ENCODE measurements at regions of chr5 and their contacts with region 1.

Region 1: DNA sequence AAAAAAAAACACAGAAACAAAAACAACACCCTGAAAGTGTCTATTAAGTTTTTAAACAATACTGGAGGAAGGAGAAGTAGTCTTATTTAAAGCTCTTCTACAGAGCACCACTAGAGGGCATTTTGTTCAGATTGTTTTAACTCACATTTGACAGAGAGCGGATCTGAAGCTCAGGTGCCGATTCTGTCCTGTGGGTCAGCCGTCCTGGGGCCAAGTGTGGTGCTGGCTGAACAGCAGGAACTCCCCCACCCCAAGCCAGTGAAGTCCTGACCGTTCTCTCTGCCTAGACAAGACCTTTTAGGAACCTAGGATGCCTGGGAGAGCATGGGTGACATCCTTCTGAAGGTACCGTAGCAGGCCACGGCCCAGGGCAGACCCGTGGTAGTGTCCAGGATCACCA is 3.9 kb downstream of the EXOC3 start:
- DNase-seq: no peak
- H3K4me3 Mint-ChIP-seq: no peak overlapping the region
- H3K27ac Mint-ChIP-seq: no peak overlapping the region
- H3K4me1 Mint-ChIP-seq: peaks cover 28% of the 10 kb centered on the region
- H3K27me3 Mint-ChIP-seq: no peaks in the 10 kb centered on the region

Region 2: DNA sequence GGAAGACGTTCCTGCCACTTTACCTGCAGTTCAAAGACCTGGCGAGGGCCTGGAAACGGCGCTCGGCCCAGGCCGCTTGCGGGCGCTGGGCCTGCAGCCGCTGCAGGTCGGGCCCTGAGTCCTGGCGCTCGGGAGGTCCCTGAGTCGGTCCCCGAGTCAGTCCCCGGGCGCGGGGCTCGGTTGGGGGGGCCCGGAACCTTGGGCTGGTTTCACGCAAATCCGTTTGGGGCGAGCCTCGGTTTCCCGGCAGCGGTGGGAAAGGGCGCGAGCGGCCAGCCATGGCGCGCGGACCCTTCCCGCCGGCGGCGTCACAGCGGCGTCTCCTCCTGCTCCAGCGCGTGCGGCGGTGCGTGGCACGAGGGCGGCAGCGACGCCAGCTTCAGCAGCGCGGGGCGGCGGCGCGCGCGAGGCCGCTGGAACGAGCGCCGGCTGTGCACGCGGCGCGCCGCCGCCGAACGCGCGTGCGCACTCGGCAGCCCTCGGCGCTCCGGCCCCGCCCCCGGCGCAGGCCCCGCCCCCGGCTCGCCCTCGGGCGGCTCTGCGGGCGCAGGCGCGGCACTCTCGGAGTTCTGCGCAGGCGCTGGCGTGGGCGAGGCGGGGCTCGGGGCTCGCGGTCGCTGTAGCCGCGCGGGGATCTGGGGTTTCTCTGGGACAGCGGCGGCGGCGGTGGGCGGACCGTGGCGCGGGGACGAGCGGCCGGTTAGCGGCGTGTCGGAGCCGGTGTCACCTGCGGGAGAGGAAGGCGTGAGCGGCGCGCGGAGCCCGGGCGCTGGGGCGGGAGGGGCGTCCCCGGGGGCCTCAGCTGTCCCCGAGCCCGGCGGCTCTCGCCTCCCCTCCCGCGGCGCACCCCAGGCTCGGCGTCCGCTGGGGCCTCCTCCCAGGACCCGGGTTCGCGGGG is 26.0 kb after region 1 on chr5:
- intact Hi-C with region 1: loop called (anchors 2 kb)
- DNase-seq: peak; percentile 82
- H3K4me3 Mint-ChIP-seq: peak overlapping the region; percentile 86
- H3K27ac Mint-ChIP-seq: peak overlapping the region; percentile 73
- H3K4me1 Mint-ChIP-seq: peaks cover 19% of the 10 kb centered on the region
- H3K27me3 Mint-ChIP-seq: peaks cover 5% of the 10 kb centered on the region

Measured in activated T-helper 2 cell treated with anti-CD3 and anti-CD28 coated beads, Interferon-gamma antibody, Interleukin-2, Interleukin-4, amounts not matched to agents 10 μg/mL and 5 μg/mL and 100 μg/mL, durations not matched to agents 14 hours and 24 hours and 36 hours (primary cell).